ENCODE measurements at regions of chr3 and their contacts with region 1.

Region 1: GRCh38 chr3:149640976-149641728 is 16.7 kb downstream of the WWTR1 start:
- DNase-seq: no peak
- ATAC-seq: no peak
- H3K4me3 ChIP-seq: no peak overlapping the region
- H3K27ac ChIP-seq: no peak overlapping the region
- H3K4me1 ChIP-seq: no peaks in the 10 kb centered on the region; the same call in 1 of the 2 replicates
- H3K27me3 ChIP-seq: no peaks in the 10 kb centered on the region
- CTCF ChIP-seq: no peak
- EP300 ChIP-seq: no peak
- POLR2A ChIP-seq: no peak
- RAD21 ChIP-seq: no peak

Region 2: GRCh38 chr3:149586871-149587270 is 54.3 kb before region 1 on chr3:
- CTCF ChIA-PET with region 1: no interaction called
- POLR2A ChIA-PET with region 1: no interaction called
- RAD21 ChIA-PET with region 1: no interaction called
- SMC1A ChIA-PET with region 1: no interaction called
- in situ Hi-C with region 1: no loop called
- intact Hi-C with region 1: no loop called
- DNase-seq: no peak
- ATAC-seq: no peak
- H3K4me3 ChIP-seq: no peak overlapping the region
- H3K27ac ChIP-seq: no peak overlapping the region
- H3K4me1 ChIP-seq: peaks cover 36% of the 10 kb centered on the region
- H3K27me3 ChIP-seq: no peaks in the 10 kb centered on the region
- CTCF ChIP-seq: no peak
- EP300 ChIP-seq: no peak
- POLR2A ChIP-seq: no peak
- RAD21 ChIP-seq: no peak

Region 3: DNA sequence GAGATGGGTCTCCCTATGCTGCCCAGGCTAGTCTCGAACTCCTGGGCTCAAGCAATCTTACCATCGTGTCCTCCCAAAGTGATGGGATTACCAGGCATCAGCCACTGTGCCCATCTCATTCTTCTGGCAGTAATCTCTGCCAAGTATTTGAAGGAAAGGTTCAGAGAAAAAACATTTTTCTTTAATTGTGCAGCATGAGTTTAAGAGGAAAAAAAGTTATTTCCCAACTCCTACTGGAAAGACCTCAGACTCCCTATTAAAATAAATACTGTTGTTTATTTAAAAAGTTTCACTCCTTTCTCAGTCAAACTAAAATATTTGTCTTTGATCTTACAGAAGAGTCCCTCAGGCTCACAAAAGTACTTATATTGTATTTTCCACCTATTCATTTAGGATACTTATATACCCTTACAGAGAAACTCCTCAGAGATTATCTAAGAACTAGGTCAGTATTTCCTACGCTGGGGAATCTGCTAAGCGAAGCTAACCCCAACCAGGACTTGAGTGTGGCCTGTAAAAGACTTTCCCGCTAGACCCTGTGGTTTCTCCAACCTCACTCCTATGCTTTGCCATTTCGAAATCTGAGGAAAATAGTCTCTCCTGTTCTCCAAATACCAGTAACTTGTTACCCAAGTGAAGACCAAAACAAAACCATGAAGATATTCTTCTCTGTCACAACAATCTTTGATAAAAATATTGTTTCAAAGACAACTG is 12.0 kb before region 1 on chr3:
- CTCF ChIA-PET with region 1: interaction called, 12 read pairs
- POLR2A ChIA-PET with region 1: interaction called, 4 read pairs
- RAD21 ChIA-PET with region 1: interaction called, 3 read pairs
- SMC1A ChIA-PET with region 1: interaction called, 7 read pairs
- in situ Hi-C with region 1: no loop called
- intact Hi-C with region 1: no loop called
- DNase-seq: no peak
- ATAC-seq: no peak
- H3K4me3 ChIP-seq: no peak overlapping the region
- H3K27ac ChIP-seq: no peak overlapping the region
- H3K4me1 ChIP-seq: no peaks in the 10 kb centered on the region; the same call in 1 of the 2 replicates
- H3K27me3 ChIP-seq: no peaks in the 10 kb centered on the region
- CTCF ChIP-seq: no peak
- EP300 ChIP-seq: no peak
- POLR2A ChIP-seq: no peak
- RAD21 ChIP-seq: no peak

Region 4: GRCh38 chr3:149783576-149783975 is 142.4 kb after region 1 on chr3:
- CTCF ChIA-PET with region 1: no interaction called
- POLR2A ChIA-PET with region 1: no interaction called
- RAD21 ChIA-PET with region 1: no interaction called
- SMC1A ChIA-PET with region 1: no interaction called
- in situ Hi-C with region 1: no loop called
- intact Hi-C with region 1: no loop called
- DNase-seq: no peak
- ATAC-seq: no peak; the same call in 1 of the 3 replicates
- H3K4me3 ChIP-seq: no peak overlapping the region
- H3K27ac ChIP-seq: no peak overlapping the region
- H3K4me1 ChIP-seq: peaks cover 4% of the 10 kb centered on the region
- H3K27me3 ChIP-seq: no peaks in the 10 kb centered on the region
- CTCF ChIP-seq: no peak
- EP300 ChIP-seq: no peak
- POLR2A ChIP-seq: no peak
- RAD21 ChIP-seq: no peak

Region 5: GRCh38 chr3:149934524-149934923 is 293.4 kb after region 1 on chr3:
- CTCF ChIA-PET with region 1: no interaction called
- POLR2A ChIA-PET with region 1: no interaction called
- RAD21 ChIA-PET with region 1: no interaction called
- SMC1A ChIA-PET with region 1: no interaction called
- in situ Hi-C with region 1: no loop called
- intact Hi-C with region 1: no loop called
- DNase-seq: no peak
- ATAC-seq: no peak
- H3K4me3 ChIP-seq: no peak overlapping the region
- H3K27ac ChIP-seq: no peak overlapping the region
- H3K4me1 ChIP-seq: no peaks in the 10 kb centered on the region
- H3K27me3 ChIP-seq: no peaks in the 10 kb centered on the region
- CTCF ChIP-seq: no peak
- EP300 ChIP-seq: no peak
- POLR2A ChIP-seq: no peak
- RAD21 ChIP-seq: no peak